ENCODE measurements at regions of chr17 and their contacts with region 1.

Region 1: DNA sequence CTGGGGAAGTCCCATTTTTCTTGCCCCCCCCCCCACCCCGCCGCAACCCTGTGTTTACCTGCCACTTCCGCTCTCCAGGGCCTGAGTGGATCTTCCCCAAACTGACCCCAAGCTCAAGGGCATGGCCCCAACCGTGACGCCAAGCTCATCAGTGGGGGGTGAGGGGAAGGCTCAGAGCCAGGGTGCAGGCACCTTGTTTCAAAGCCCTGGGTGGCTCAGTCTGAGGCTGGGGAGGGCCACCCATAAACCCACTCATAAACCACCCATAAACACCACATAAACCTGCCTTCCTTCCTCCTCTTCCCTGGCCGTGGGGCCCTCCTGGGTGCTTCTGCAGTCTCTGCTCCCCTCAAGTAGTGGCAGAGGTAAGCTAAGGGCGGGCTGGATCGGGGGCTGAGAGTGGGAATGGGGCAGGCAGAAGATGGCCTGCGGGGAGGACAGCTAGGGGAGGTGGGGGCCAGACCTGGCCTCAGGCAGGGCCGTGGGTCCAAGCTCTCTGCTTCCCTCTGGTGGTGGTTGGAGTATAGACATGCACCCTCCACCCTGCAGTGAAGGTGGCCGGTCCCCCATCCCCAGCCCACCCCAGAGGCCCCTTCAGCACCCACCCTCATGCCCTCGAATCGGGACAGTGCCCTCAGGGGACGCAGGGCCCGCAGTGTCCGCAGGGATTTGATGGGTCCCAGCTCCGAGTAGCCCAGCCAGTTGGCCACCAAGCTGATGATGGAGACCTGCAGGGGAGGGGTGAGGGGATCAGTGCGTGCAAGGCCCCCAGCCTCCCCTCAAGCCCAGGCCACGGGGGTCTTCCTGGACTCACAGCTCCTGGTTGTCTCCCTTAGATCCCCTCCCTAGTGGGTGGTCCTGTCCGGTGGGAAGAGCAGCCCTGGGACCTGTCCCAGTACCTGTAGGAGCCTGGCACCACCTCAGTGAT is 14.6 kb upstream of the CD79B start:
- DNase-seq: peak; percentile 67
- ATAC-seq: peak; percentile 72
- H3K4me3 Mint-ChIP-seq: peak overlapping the region; percentile 74
- H3K27ac Mint-ChIP-seq: peak overlapping the region; percentile 91
- H3K4me1 Mint-ChIP-seq: peaks cover 47% of the 10 kb centered on the region
- H3K27me3 Mint-ChIP-seq: no peaks in the 10 kb centered on the region
- CTCF ChIP-seq: no peak

Region 2: DNA sequence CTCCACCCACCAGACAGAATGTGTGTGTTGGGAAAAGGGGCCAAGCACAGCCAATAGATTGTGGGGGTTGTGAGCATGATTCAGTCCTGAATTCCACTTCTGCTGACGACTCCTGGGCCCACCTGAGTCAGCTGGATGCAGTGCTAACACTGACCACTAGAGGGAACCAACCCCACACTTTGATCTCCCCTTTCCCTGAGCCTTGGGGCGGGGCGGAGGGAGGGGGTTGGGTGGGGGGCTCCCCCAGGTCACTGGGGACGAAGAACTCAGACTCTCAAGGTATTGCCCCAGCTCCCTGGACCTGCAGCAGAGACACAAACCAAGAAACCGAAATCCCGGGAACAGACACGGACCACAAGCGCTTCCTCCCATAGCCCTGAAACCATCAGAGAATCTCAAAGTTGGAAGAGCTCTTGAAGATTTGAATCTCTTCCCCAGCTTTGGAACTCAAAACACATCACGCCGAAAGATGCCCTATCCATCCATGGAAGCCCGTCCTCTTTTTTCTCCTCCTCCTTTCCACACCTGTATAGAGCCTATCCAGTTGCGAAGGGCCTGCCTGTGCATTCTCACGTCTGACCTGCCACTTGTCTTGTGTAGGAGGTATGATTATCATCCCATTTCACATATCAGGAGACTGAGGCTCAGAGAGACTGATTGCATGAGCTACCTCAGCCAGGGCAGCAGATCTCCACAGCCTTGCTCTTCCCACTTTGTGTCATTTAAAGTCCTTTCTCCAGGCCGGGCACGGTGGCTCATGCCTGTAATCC is 34.9 kb before region 1 on chr17:
- CTCF ChIA-PET with region 1: interaction called, 321 read pairs
- POLR2A ChIA-PET with region 1: interaction called, 64 read pairs
- intact Hi-C with region 1: loop called (anchors 1 kb)
- DNase-seq: peak; percentile 59
- ATAC-seq: peak; percentile 57
- H3K4me3 Mint-ChIP-seq: no peak overlapping the region
- H3K27ac Mint-ChIP-seq: peak overlapping the region; percentile 35
- H3K4me1 Mint-ChIP-seq: peaks cover 52% of the 10 kb centered on the region
- H3K27me3 Mint-ChIP-seq: peaks cover 1% of the 10 kb centered on the region
- CTCF ChIP-seq: no peak

Region 3: GRCh38 chr17:63925645-63926044 is 21.1 kb before region 1 on chr17:
- CTCF ChIA-PET with region 1: interaction called, 321 read pairs
- POLR2A ChIA-PET with region 1: interaction called, 837 read pairs
- intact Hi-C with region 1: no loop called
- DNase-seq: peak; percentile 85
- ATAC-seq: peak; percentile 65
- H3K4me3 Mint-ChIP-seq: peak overlapping the region; percentile 71
- H3K27ac Mint-ChIP-seq: peak overlapping the region; percentile 96
- H3K4me1 Mint-ChIP-seq: peaks cover 95% of the 10 kb centered on the region
- H3K27me3 Mint-ChIP-seq: no peaks in the 10 kb centered on the region
- CTCF ChIP-seq: no peak

Region 4: DNA sequence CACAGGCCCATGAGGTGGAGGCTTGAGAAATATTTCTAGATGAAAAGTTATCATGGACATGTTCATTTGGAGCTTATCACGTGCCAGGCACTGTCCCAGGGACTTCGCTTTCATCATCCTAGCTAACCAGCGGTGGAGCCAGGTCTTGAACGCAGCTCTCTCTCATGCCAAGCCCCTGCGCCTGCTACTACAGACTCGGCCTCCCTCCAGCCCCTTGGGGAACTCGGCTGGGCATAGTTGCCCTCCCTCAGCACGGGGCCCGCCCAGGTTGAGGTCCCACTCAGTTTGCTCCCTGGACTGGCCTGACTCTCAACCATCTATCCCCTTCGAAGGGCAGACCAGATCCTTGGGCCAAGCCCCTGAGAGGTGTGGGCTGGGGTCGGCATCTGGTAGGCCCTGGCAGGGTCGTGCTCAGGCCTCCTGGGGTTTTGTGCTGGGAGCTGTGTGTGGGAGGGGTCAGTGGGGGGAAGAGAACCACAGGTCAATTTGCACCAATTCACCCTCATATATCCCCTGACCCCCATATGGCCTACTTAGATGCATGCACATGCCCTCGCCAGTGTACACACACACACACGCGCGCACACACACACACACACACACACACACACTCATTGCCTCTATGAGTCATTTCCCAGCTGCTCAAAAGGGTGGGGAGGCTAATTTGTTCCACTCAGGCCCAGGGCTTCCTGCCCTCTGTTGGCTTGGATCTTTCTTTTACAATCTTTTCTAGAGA is 38.1 kb after region 1 on chr17:
- CTCF ChIA-PET with region 1: interaction called, 9 read pairs
- POLR2A ChIA-PET with region 1: interaction called, 8 read pairs
- intact Hi-C with region 1: loop called (anchors 1 kb)
- DNase-seq: no peak
- ATAC-seq: peak; percentile 89
- H3K4me3 Mint-ChIP-seq: no peak overlapping the region
- H3K27ac Mint-ChIP-seq: no peak overlapping the region
- H3K4me1 Mint-ChIP-seq: peaks cover 16% of the 10 kb centered on the region
- H3K27me3 Mint-ChIP-seq: no peaks in the 10 kb centered on the region
- CTCF ChIP-seq: no peak

Measured in activated B cell treated with CpG ODN at 0.5 μM for 24 hours (primary cell).